Breast epithelium (tissue), 4 donors: ENCODE measurements at regions of chr20 and their contacts with region 1.

Region 1: GRCh38 chr20:54324652-54325285 is 116.9 kb downstream of the PFDN4 start:
- DNase-seq: no peak
- H3K4me3 ChIP-seq: no peak overlapping the region
- H3K27ac ChIP-seq: no peak overlapping the region
- H3K4me1 ChIP-seq: no peaks in the 10 kb centered on the region
- H3K27me3 ChIP-seq: no peaks in the 10 kb centered on the region
- CTCF ChIP-seq: no peak
- POLR2A ChIP-seq: no peak

Region 2: DNA sequence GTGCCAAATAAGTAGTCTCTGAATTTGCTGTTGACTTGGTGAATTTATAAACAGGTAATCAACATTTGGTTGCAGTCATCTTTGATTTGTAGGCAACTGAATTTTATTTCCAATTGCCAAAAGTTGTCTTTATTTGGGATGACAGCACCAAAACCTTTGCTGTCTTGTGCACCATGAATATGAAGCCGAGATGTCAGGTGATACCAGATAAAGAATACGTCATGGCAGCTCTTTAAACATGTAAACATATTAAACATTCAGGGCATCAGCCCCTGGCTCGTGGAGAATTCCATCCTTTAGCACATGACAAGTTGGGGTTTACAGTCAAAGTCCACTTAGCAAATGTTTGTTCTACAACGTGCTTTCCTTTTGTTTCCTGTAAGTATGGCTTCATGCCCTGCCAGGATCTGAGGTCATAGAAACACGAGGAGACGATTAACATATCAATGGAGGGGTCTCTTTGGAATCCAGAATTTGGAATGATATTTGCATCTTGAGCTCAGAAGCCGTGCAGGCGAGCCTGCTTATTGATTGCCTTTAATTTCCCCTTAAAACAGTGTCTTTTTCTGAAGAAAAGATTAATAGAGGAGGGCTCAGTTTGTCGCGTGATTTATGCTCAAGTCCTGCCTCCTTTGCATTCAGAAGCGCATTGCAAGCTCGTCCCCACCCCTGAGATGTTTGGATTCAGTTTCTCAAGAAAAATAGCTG is 560.9 kb before region 1 on chr20:
- intact Hi-C with region 1: loop called (anchors 5 kb)
- DNase-seq: no peak
- H3K4me3 ChIP-seq: peak overlapping the region in 1 of 3 donors; percentile 9
- H3K27ac ChIP-seq: peak overlapping the region; percentile 46 to 48
- H3K4me1 ChIP-seq: no peaks in the 10 kb centered on the region
- H3K27me3 ChIP-seq: no peaks in the 10 kb centered on the region
- CTCF ChIP-seq: no peak
- POLR2A ChIP-seq: no peak